ENCODE measurements at regions of chr10 and their contacts with region 1.

Region 1: DNA sequence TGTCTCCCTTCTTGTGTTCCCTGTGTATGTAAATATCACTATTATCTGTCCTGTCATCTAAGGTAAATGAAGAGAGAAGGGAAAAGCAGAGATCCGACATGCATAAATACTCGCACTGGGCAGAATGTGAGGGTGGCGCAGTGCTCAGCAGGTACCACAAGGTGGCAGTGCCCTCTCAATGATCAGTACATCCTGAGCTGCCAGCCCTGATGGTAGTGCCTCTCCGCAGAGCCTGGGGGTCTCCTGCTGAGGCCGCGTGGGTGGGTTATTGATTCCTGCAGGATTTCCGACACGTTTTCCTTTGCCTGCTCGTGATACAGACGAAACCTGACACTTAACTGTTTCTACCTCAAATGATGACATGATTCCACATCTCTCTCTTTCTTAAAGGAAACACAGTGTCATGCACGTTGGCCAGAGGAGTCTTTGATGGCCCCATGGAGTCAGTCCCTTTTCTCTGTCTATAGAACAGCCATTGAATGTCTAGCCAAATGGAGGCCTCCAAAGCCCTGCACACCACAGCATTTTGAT is 19.8 kb downstream of the RGR start:
- DNase-seq: peak; percentile 72 to 89 (median 80)
- H3K4me3 ChIP-seq: peak overlapping the region in 13 of 59 donors; percentile 3 to 42 (median 22)
- H3K27ac ChIP-seq: peak overlapping the region in 11 of 59 donors; percentile 3 to 66 (median 29)
- H3K27me3 ChIP-seq: no peaks in the 10 kb centered on the region
- CTCF ChIP-seq: peak; percentile 72 to 99 (median 95)

Region 2: GRCh38 chr10:84076540-84077195 is 188.0 kb before region 1 on chr10:
- intact Hi-C with region 1: no loop called
- DNase-seq: no peak
- H3K4me3 ChIP-seq: no peak overlapping the region
- H3K27ac ChIP-seq: peak overlapping the region in 6 of 59 donors; percentile 5 to 36 (median 15)
- H3K27me3 ChIP-seq: no peaks in the 10 kb centered on the region
- CTCF ChIP-seq: peak in 2 of 56 donors; percentile 6 to 23

Region 3: DNA sequence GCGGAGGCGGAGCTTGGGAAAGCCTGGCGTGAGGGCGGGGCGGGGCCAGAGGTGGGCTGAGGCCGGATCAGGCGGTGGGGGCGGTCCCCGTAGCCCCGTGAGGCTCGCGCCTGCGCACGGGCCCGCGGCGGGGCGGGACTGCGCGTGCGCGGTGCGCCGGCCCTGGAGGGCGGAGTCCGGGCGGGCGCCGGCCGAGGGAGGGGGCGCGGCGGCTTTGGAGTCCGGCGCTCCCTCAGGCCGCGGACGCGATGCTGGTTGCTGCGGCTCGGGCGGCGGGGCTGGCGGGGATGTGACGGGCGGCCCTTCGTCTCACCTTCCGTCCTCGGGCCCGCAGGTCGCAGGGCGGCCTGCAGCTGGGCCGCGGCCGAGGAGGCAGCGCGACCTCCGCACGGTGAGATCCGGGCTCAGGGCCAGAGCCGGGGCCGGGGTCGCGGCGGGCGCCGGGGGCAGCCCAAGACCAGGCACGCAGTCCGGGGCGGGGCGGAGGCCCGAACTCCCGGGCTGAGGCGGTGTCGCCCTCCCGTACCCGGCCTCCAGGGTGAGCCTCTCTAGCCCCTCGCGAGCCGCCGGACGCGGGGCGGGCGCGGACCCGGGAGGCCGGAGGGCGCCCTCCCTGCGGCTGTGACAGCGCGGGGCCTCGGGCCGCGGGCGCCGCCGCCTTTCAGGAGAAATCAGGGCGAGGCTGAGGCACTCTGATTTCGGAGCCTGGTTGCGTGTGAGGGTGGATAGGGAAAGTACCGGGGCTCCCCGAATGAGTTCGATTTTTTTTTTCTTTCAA is 63.9 kb after region 1 on chr10 and contains the start of gene CCSER2:
- intact Hi-C with region 1: loop called in 1 of 2 experiments (anchors 5 kb)
- DNase-seq: peak; percentile 87 to 99 (median 94)
- H3K4me3 ChIP-seq: peak within 1 kb of the TSS; percentile 62 to 99 (median 86)
- H3K27ac ChIP-seq: peak within 1 kb of the TSS; percentile 62 to 98 (median 92)
- H3K27me3 ChIP-seq: no peaks in the 10 kb centered on the region
- CTCF ChIP-seq: peak in 20 of 56 donors; percentile 1 to 48 (median 26)
- total RNA-seq, gene CCSER2: 103 to 206 (median 150) TPM

Region 4: DNA sequence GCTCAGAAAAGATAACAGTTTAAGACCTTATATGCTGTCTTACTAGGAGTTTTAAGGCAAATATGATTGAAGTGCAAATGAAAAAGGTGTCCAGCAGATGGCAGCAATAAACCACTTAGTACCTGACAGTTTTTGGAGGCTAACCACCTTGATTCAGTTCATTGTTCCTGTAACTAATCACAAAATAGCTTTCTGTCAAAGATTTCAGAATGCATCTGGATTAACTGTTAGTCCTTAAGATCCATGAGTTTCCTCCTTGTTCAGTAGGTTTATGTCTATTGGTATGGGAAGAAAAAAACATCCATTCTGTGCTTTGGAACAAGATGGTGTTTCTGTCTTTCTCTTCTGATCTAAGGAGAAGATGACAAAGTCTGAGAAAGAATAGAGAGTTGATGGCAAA is 110.3 kb after region 1 on chr10:
- intact Hi-C with region 1: loop called (anchors 5 to 10 kb)
- DNase-seq: peak in 2 of 10 donors; percentile 25 to 43
- H3K4me3 ChIP-seq: no peak overlapping the region
- H3K27ac ChIP-seq: peak overlapping the region in 2 of 59 donors; percentile 5 to 31
- H3K27me3 ChIP-seq: no peaks in the 10 kb centered on the region
- CTCF ChIP-seq: peak; percentile 56 to 94 (median 78)

Region 5: GRCh38 chr10:84429926-84430520 is 165.3 kb after region 1 on chr10:
- intact Hi-C with region 1: loop called in 1 of 2 experiments (anchors 10 kb)
- DNase-seq: peak in 8 of 10 donors; percentile 39 to 79 (median 52)
- H3K4me3 ChIP-seq: no peak overlapping the region
- H3K27ac ChIP-seq: no peak overlapping the region
- H3K27me3 ChIP-seq: no peaks in the 10 kb centered on the region
- CTCF ChIP-seq: peak; percentile 34 to 81 (median 66)

Region 6: GRCh38 chr10:84537447-84537931 is 272.8 kb after region 1 on chr10:
- intact Hi-C with region 1: loop called (anchors 1 kb)
- DNase-seq: peak in 5 of 10 donors; percentile 26 to 51 (median 45)
- H3K4me3 ChIP-seq: peak overlapping the region in 5 of 59 donors; percentile 17 to 35 (median 30)
- H3K27ac ChIP-seq: no peak overlapping the region
- H3K27me3 ChIP-seq: peaks cover 0 to 5% (median 0%) of the 10 kb centered on the region in 45 donors
- CTCF ChIP-seq: peak; percentile 78 to 99 (median 92)